Activated CD8-positive, alpha-beta T cell treated with anti-CD3 and anti-CD28 coated beads, Interleukin-2, amount 10 ng/mL, durations not matched to agents 7 days and 5 days (primary cell): ENCODE measurements at regions of chr7 and their contacts with region 1.

Region 1: GRCh38 chr7:27739909-27740448 is at the start of gene TAX1BP1:
- DNase-seq: peak; percentile 96
- ATAC-seq: peak; percentile 93
- H3K4me3 Mint-ChIP-seq: peak within 1 kb of the TSS; percentile 98
- H3K27ac Mint-ChIP-seq: peak within 1 kb of the TSS; percentile 98
- H3K4me1 Mint-ChIP-seq: peaks cover 25% of the 10 kb centered on the region
- H3K27me3 Mint-ChIP-seq: peaks cover 9% of the 10 kb centered on the region
- total RNA-seq, gene TAX1BP1: 53.1 to 53.9 TPM

Region 2: DNA sequence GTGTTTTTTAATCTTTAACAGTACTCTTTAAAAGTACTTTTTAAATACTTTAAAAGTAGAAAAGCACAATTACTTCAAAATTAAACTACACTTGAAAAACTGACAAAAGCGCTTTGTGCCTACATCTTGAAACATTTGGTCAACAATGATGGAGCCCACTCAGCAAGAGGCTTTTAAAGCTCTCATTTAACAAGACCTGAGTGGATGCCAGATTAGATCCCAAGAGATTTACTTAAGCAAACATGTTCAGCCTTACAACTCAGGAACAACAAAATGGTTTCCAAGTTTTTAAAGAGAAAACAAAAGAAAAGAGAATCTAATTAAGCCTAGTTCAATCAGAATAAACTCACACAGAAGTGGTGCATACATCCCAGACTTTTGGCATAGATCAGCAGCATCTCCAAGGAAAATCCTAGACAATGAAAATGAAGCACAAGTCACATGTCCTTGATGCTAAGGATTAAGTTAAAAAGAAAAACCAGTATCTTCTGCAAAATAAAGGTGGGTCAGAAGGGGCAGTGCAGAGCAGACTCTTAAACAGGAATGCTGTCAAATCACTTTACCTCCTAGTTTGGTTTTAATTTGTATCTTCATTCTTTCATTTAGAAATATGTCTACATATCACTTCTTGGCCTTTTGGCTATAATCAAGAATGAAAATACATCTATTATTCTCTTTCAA is 103.5 kb before region 1 on chr7:
- CTCF ChIA-PET with region 1: no interaction called
- POLR2A ChIA-PET with region 1: no interaction called
- DNase-seq: no peak
- ATAC-seq: no peak
- H3K4me3 Mint-ChIP-seq: no peak overlapping the region
- H3K27ac Mint-ChIP-seq: no peak overlapping the region
- H3K4me1 Mint-ChIP-seq: peaks cover 26% of the 10 kb centered on the region
- H3K27me3 Mint-ChIP-seq: no peaks in the 10 kb centered on the region

Region 3: DNA sequence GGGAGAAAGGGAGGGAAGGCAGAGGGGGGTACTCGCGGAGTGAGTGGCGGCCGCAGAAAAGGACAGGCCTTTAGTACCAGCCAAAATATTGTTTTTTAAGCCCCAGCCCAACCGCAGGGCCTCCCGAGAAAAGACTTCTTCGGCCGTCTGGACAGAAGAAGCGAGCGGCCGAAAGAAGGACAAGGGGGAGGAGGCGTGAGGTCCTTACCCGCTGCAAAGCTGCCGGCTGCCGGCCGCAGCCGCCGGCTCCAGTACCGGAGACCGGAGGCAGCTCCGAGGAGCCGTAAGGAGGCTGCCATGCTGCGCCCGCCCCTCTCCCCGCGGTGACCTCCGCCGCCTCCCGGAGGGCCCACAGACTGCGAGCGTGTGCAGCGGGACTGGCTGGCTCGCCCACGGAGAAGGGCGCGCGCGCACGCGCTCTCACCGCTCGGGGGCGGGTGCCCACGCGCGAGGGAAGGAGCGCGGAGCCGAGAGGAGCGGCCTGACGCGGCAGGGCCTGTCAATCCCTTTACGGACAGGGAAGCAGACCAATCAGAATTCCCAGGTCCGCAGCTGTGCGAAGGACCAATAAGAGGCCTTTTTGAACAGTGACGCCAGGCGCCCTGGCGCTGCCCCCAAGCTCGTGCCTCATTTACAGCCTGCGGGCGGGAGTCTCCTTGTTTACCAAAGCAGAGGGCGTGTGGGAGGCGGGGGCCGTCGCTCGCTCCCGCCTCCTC is 77.3 kb before region 1 on chr7 and contains the start of gene HIBADH:
- CTCF ChIA-PET with region 1: interaction called, 4 read pairs
- POLR2A ChIA-PET with region 1: interaction called, 24 read pairs
- DNase-seq: peak; percentile 96
- ATAC-seq: peak; percentile 99
- H3K4me3 Mint-ChIP-seq: peak within 1 kb of the TSS; percentile 80
- H3K27ac Mint-ChIP-seq: peak within 1 kb of the TSS; percentile 69
- H3K4me1 Mint-ChIP-seq: peaks cover 22% of the 10 kb centered on the region
- H3K27me3 Mint-ChIP-seq: peaks cover 3% of the 10 kb centered on the region
- total RNA-seq, gene HIBADH: 9.4 to 10.3 TPM